Activated CD4-positive, alpha-beta T cell treated with anti-CD3 and anti-CD28 coated beads, Interleukin-2, amount 10 ng/mL, durations not matched to agents 24 days and 14 days (primary cell): ENCODE measurements at regions of chr2 and their contacts with region 1.

Region 1: DNA sequence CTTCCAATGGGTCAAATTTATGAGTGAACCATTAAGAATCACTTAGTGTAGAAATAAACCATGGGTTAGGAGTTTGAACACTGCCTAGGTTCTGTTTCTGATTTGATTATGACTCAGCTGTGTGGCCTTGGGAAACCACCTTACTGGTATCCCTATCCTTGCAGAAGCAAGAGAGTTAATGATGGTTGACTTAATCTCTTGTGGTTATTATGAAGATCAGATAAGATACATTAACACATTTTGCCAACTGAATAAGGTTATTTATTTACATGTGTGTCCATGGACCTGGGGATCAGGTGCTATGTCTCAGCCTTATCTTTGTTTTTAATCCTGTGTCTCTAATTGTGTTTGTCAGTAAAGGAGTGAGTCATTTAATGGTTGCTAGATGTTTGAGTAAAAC is 5.4 kb upstream of the KCNJ13 start:
- DNase-seq: peak; percentile 79
- H3K4me3 Mint-ChIP-seq: peak overlapping the region; percentile 26
- H3K27ac Mint-ChIP-seq: peak overlapping the region; percentile 57
- H3K4me1 Mint-ChIP-seq: peaks cover 10% of the 10 kb centered on the region
- H3K27me3 Mint-ChIP-seq: no peaks in the 10 kb centered on the region

Region 2: GRCh38 chr2:232838406-232838874 is 56.7 kb after region 1 on chr2:
- intact Hi-C with region 1: loop called (anchors 1 kb)
- DNase-seq: peak; percentile 84
- H3K4me3 Mint-ChIP-seq: peak overlapping the region; percentile 40
- H3K27ac Mint-ChIP-seq: peak overlapping the region; percentile 51
- H3K4me1 Mint-ChIP-seq: peaks cover 28% of the 10 kb centered on the region
- H3K27me3 Mint-ChIP-seq: no peaks in the 10 kb centered on the region